Endothelial cell of umbilical vein (primary cell): ENCODE measurements at regions of chr17 and their contacts with region 1.

Region 1: DNA sequence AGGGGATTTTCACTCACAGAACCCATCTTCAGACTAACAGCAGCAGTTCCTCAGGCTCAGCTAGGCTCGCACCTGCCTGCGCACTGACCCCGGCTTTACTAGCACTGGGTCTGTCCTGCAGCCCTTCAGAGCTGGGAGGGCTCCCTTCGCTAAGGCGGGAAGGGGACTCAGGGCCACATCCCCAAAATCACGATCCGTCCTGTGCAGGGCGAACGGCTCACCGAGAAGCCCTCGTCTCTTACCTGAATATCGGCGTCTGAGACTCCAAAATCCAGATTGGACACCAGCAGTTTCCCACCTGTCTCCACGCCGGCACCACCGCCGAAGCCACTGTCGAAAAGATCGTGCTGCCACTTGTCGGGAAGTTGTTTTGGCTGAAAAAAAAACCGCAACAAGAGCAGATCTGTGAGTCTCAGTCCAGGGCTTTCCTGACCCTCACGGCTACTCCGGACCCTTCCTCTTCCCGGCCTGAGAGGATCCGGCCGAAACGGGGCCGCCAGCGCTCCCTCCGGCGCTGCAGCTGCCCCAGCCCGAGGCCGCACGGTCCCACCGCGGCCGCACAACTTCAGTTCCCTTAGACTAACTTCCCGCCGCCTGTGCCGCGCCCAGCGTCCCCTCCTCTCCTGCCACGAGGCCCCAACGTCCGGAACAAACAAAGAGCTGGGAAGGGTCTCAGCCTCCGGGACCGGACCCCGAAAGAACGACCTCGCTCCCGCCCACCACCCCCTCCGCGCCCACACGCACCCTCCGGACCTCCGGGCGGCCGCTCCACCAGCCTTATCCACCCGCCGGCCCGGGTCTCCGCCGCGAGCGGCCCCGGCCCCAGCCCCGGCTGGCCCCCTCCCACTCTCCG is 713 bp downstream of the ALYREF start:
- DNase-seq: peak; percentile 34
- H3K4me3 ChIP-seq: peak overlapping the region; percentile 76 to 96 (median 77)
- H3K27ac ChIP-seq: peak overlapping the region; percentile 73
- H3K4me1 ChIP-seq: peaks cover 13% of the 10 kb centered on the region
- H3K27me3 ChIP-seq: no peaks in the 10 kb centered on the region
- CTCF ChIP-seq: no peak
- POLR2A ChIP-seq: no peak

Region 2: GRCh38 chr17:81871387-81872230 is 19.1 kb before region 1 on chr17:
- CTCF ChIA-PET with region 1: interaction called, 10 read pairs
- POLR2A ChIA-PET with region 1: no interaction called
- dilution Hi-C with region 1: no loop called
- intact Hi-C with region 1: loop called (anchors 2 kb)
- DNase-seq: peak; percentile 81
- H3K4me3 ChIP-seq: peak overlapping the region; percentile 7 to 77 (median 50)
- H3K27ac ChIP-seq: peak overlapping the region; percentile 77
- H3K4me1 ChIP-seq: peaks cover 17% of the 10 kb centered on the region
- H3K27me3 ChIP-seq: no peaks in the 10 kb centered on the region
- CTCF ChIP-seq: peak; percentile 6 to 45
- POLR2A ChIP-seq: peak; percentile 29

Region 3: DNA sequence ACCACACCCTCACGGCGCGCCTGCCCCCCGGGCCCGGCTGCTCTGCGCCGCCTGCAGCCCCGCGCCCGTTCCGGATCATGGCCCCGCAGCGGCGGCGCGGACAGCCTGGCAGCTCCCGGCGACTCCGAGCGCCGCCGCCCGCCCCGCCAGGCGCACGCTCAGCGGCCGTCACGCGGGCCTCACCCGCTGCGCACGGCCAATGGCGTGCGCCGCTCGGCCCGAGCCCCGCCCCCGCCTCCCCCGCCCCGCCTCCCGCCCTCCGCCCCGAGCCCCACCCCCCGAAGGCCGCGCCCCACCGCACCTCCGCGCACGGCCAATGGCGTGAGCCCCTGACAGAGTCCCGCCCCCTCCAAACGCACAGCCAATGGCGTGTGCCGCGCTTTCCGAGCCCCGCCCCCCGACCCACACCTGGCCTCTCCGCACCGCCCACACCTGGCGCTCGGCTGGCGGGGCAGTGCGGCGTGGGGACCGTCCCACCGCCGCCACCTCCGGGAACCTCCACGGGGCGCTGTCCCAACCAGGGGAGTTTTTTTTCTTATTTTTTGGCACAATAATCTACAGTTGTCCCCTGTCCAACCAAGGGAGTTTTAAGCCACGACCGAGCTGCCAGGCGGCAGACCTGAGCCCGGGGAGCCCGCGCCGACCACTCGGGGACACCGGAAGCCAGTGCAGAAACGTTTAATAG is 20.7 kb after region 1 on chr17 and contains the start of gene PCYT2:
- CTCF ChIA-PET with region 1: interaction called, 4 read pairs
- POLR2A ChIA-PET with region 1: no interaction called
- dilution Hi-C with region 1: no loop called
- intact Hi-C with region 1: loop called (anchors 2 kb)
- DNase-seq: peak; percentile 71
- H3K4me3 ChIP-seq: peak within 1 kb of the TSS; percentile 56 to 72 (median 67)
- H3K27ac ChIP-seq: no peak within 1 kb of the TSS
- H3K4me1 ChIP-seq: peaks cover 6% of the 10 kb centered on the region
- H3K27me3 ChIP-seq: no peaks in the 10 kb centered on the region
- CTCF ChIP-seq: no peak
- POLR2A ChIP-seq: peak; percentile 37
- total RNA-seq, gene PCYT2: 52.3 and 57.1 TPM in 2 replicates